A549 (cell line): ENCODE measurements at regions of chr1 and their contacts with region 1.

Region 1: DNA sequence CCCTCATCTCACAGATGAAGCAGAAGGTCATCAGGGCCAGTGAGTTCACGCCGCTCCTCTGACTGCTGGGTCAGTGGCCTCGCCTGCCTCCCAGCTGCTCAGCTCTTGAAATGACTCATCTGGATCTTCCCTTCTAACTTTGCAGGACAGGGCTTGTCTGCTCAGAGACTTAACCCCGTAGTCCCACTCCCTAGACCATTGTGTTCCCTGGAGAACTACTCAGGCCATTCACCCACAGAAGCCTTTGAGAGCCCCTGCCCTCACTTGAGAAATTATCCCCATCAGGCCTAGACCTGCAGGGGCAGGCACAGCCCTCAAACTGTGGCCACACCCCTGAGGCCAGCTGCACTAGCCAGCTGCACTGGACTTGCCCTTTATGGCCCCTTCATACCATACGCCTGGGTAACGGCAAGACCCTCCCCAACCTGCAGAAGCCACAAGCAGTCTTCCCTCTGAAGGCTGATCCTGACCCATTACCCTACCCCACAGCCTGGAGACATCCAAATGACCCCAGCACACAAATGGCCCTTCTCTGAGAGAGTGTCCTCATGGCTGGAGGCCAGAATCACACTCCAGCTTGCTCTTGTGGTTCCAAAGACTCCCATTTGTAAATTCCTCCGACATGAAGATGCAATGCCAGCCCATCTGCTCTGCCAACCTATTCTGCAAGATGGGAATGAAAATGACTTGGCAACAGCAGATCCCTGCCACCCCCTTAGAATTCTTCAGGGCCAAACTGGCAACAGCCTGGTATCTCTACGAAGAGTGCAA is 33.2 kb downstream of the RCSD1 start:
- DNase-seq: peak; percentile 49 to 57
- ATAC-seq: peak; percentile 82 to 87
- H3K4me3 ChIP-seq: no peak overlapping the region
- H3K27ac ChIP-seq: peak overlapping the region; percentile 37 to 75
- H3K4me1 ChIP-seq: peaks cover 35% of the 10 kb centered on the region
- CTCF ChIP-seq: no peak
- EP300 ChIP-seq: no peak
- POLR2A ChIP-seq: no peak
- RAD21 ChIP-seq: no peak

Region 2: DNA sequence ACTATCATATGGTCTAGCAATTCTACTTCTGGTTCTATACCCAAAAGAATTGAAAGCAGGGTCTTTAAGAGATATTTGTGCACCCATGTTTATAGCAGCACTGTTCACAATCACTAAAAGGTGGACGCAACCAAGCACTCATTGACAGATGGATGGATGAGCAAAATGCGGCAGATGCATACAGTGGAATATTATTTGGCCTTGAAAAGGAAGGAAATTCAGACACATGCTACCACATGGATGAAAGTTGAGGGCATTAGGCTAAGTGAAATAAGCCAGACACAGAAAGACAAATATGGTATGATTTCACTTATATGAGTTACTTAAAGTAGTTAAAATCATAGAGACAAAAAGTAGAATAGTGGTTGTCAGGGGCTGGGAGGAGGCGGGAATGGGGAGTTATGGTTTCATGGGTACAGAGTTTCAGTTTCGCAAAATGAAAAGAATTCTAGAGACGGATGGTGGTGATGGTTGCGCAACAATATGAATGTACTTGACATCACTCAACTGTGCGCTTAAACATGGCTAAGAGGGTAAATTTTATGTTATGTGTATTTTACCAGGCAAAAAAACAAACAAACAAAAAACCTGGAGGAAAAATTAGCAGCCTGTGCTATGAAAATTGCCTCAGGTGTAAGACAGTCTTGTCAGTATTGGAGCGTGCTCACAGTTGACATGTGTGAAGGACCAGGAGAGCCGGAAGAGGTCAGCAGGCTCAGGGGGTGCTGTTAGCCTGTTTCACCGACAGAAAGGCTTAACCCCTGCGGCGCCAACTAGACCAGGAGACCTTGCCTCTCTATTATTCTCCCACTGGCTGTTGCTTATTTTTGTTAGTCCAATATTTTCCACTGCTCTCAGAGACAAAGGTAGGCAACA is 171.4 kb before region 1 on chr1:
- CTCF ChIA-PET with region 1: no interaction called
- POLR2A ChIA-PET with region 1: no interaction called
- DNase-seq: peak in 1 of 2 experiments; percentile 8
- ATAC-seq: peak in 1 of 2 experiments; percentile 66; a peak in 2 of 6 replicates
- H3K4me3 ChIP-seq: no peak overlapping the region
- H3K27ac ChIP-seq: no peak overlapping the region
- H3K4me1 ChIP-seq: no peaks in the 10 kb centered on the region
- CTCF ChIP-seq: no peak
- EP300 ChIP-seq: no peak
- POLR2A ChIP-seq: no peak
- RAD21 ChIP-seq: no peak

Region 3: DNA sequence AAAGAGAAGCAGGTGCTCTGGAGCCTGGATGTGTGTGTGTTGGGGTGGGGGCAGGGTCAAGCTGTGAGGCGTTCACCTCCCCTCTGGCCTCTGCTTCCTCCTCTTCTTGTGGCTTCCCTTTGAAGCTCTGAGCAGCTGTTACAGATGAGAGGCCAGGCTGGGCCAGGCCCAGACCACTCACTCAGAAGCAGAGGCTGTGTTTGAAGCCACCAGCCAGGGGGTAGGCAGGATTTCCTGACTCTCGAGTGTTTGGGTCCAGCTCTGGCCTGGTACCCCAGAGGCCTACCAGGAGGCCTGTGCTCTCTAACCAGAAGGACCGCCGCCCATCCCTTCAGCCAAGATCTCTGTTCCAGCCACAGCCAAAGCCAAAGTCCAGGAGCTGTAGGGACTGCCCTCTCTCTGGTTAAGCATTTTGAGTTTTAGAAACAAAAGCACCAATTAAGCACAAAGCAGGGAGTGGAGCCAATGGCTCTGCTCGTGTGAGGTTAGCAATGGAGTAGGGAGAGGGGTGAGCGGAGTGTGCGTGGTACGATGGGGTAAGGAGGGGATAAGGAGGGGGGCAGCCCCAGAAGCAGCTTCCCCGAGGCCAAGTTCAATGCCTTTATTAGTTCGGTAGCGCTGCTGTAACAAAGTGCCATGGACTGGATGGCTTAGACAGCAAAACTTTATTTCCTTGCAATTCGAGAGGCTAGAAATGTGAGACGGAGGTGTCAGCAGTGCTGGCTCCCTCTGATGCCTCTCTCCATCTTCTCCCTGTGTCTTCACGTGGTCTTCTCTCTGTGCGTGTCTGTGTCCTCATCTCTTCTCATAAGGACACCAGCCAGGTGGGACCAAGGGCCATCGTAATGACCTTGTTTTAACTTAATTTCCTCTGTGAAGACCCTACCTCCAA is 12.7 kb before region 1 on chr1:
- CTCF ChIA-PET with region 1: interaction called, 10 read pairs
- POLR2A ChIA-PET with region 1: no interaction called
- DNase-seq: no peak
- ATAC-seq: no peak
- H3K4me3 ChIP-seq: no peak overlapping the region
- H3K27ac ChIP-seq: no peak overlapping the region
- H3K4me1 ChIP-seq: no peaks in the 10 kb centered on the region
- CTCF ChIP-seq: no peak
- EP300 ChIP-seq: no peak
- POLR2A ChIP-seq: no peak
- RAD21 ChIP-seq: no peak

Region 4: DNA sequence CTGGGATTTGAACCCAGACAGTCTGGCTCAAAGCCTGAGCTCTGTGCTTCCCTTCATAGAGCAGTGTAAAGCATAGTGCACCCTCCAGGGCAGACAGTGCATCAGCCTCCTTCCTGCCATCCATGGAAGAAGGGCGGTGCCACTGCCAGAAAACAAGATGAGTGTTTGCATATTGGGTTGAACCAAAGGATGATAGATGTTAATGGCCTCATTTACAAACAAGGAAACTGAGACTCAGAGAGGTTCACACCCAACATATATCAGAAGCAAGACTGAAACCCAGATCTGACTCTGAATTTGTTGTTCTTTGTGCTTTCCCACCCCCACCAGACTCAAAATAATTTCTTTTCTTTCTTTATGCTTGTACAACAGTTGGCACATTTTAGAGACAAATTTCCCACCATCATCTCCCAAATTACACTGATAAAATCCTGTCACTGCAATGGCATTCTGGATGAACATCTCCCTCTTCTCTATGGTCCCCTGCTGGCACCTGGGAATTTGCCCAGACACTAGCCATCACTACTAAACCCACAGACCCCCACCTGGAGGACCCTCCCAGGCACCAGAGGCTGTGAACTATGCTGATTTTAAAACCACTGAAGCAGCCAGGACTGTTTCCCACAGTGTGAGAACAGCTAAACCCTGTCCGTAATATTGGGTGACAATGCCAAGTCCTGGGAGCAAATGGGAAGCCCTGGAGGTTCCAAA is 13.2 kb after region 1 on chr1:
- CTCF ChIA-PET with region 1: interaction called, 13 read pairs
- POLR2A ChIA-PET with region 1: no interaction called
- DNase-seq: no peak
- ATAC-seq: no peak
- H3K4me3 ChIP-seq: no peak overlapping the region
- H3K27ac ChIP-seq: no peak overlapping the region
- H3K4me1 ChIP-seq: no peaks in the 10 kb centered on the region
- CTCF ChIP-seq: no peak
- EP300 ChIP-seq: no peak
- POLR2A ChIP-seq: no peak
- RAD21 ChIP-seq: no peak